Activated CD4-positive, alpha-beta T cell treated with anti-CD3 and anti-CD28 coated beads for 36 hours (primary cell): ENCODE measurements at regions of chr14 and their contacts with region 1.

Region 1: DNA sequence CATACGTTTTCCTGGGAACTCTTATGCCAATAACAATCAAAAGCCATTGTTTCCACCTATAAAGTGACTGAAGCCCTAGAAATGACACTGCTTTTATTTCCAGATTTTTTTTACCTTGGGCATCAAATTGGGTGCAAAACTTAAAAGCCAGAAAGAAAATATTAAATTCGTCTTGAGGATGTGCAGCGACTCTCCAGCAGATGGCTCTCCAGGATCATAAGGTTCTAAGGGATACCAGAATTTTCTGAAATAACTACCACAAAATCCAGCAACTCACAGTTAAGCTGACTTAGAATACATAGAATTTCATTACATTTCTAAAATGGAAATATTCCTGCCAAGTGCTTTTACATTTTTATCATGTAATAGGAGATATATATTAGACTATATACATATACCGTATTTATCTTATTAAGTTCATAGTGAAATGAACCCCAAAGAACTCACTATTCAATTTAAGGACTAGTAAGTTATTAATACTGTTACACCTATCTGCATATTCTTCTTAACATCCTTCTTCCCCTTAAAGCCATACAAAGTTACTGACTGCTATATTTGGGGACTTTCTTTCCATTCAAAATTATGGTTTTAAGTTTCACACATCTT is 44.0 kb downstream of the ARMH4 start:
- DNase-seq: peak; percentile 59
- ATAC-seq: no peak
- H3K4me3 Mint-ChIP-seq: no peak overlapping the region
- H3K27ac Mint-ChIP-seq: no peak overlapping the region
- H3K4me1 Mint-ChIP-seq: peaks cover 6% of the 10 kb centered on the region
- H3K27me3 Mint-ChIP-seq: peaks cover 14% of the 10 kb centered on the region

Region 2: DNA sequence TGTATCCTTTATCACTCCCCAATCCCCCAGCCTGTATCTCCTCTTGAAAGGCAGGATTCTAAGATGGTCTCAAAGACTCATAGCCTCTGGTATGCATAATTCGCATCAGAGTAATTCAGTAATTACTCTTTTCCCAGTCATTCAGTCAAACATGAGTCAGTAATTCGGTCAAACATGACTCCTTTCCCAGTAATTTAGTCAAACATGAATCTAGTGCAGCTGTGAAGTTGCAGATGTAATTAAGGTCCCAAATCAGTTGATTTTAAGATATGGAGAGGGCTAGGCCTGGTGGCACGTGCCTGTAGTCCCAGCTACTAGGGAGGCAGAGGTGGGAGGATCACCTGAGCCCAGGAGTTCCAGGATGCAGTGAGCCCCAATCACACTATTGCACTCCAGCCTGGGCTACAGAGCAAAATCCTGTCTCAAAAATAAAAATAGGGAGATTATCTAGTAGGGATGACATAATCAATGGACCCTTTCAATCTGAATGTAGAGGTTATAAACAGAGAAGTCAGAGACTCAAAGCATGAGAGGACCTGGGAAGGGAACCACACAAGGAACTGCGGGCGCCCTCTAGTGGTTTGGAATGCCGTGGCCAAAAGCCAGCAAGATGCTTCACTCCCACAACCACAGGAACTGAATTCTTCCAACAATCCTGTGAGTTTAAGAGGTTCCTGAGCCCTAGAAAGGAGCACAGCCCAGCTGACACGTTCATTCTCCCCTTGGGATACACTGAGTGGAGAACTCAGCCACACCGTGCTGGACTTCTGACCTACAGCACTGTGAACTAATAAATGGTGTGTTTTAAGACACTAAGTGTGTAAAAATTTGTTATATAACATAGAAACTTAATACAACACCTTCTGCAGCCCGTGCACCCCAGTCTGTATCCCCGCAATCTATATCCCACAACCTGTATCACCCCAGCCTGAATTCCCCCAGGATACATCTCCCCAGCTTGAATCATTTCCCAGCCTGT is 58.2 kb after region 1 on chr14:
- CTCF ChIA-PET with region 1: interaction called, 6 read pairs
- POLR2A ChIA-PET with region 1: no interaction called
- intact Hi-C with region 1: loop called (anchors 1 kb)
- DNase-seq: peak; percentile 89
- ATAC-seq: peak; percentile 73
- H3K4me3 Mint-ChIP-seq: no peak overlapping the region
- H3K27ac Mint-ChIP-seq: no peak overlapping the region
- H3K4me1 Mint-ChIP-seq: peaks cover 9% of the 10 kb centered on the region
- H3K27me3 Mint-ChIP-seq: peaks cover 5% of the 10 kb centered on the region

Region 3: DNA sequence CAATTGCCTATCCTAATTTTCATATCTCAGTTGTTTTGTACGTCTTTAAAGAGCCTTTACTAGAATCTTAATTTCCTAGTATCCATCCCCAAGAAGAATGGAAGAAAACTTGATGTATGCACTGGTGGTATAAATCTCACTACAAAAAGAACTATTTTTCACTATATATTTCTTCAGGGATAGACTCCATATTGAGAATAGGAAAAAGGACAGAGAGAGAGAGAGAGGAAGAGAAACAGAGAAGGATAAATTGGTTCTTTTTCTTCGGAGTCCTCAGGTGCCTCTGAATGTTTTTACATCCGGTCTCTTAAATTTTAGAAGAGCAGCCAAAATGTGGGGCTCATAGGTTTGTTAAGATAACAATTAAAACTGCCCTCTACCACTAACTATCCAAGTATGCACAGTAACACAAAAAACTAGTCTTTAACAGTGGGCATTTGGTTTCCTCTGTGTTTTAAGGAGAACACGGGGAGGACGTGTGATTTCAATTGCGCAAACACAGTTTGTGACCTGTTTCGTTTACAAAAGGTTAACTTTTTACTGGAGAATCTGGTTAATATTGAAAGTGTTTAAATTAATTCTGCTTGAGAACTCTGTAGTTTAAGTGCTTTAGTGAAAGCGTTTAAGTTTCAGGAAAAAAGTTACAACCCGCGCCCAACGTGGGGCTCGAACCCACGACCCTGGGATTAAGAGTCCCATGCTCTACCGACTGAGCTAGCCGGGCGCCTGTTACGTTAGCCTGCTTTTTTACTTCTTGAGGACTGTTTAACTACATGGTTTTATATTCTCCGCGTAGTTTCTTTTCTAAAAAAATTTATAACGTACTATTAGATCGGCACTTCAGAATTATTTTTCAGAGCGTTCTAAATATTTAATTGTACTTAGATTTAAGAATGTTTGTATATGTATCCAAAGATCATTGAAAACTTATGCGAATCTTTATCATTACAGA is 131.5 kb after region 1 on chr14:
- CTCF ChIA-PET with region 1: no interaction called
- POLR2A ChIA-PET with region 1: no interaction called
- intact Hi-C with region 1: loop called in 1 of 2 experiments (anchors 5 kb)
- DNase-seq: peak; percentile 87
- ATAC-seq: peak; percentile 6
- H3K4me3 Mint-ChIP-seq: no peak overlapping the region
- H3K27ac Mint-ChIP-seq: no peak overlapping the region
- H3K4me1 Mint-ChIP-seq: peaks cover 21% of the 10 kb centered on the region
- H3K27me3 Mint-ChIP-seq: no peaks in the 10 kb centered on the region

Region 4: DNA sequence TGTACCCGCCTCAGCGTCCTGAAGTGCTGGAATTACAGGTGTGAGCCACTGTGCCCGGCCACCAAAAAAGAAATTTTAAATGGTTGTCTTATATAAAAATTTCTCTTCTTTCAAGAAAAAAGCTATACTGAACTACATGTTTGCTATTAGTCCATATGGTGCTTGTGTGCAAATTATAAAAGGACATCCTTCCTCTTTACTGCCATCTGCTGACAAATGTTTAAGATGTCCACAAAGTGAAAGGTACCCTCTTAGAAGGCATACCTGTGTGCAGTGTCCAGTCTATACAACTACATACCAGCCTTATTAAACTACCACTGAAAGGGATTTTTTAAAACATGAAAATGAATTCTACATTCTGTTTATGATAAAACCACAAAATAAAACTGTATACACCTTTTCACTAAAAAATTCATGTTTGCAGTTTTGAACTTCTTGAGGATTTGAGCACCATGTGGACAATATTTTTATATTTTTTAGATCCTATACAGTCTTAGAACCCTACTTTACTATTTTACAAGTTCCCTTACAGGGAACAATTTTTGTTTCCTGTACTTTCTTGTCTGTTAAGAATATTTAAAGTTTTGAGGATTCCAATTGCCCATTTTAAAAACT is 254.9 kb after region 1 on chr14:
- CTCF ChIA-PET with region 1: interaction called, 3 read pairs
- POLR2A ChIA-PET with region 1: no interaction called
- intact Hi-C with region 1: loop called (anchors 1 to 2 kb)
- DNase-seq: no peak
- ATAC-seq: peak; percentile 63
- H3K4me3 Mint-ChIP-seq: no peak overlapping the region
- H3K27ac Mint-ChIP-seq: no peak overlapping the region
- H3K4me1 Mint-ChIP-seq: peaks cover 8% of the 10 kb centered on the region
- H3K27me3 Mint-ChIP-seq: no peaks in the 10 kb centered on the region

Region 5: DNA sequence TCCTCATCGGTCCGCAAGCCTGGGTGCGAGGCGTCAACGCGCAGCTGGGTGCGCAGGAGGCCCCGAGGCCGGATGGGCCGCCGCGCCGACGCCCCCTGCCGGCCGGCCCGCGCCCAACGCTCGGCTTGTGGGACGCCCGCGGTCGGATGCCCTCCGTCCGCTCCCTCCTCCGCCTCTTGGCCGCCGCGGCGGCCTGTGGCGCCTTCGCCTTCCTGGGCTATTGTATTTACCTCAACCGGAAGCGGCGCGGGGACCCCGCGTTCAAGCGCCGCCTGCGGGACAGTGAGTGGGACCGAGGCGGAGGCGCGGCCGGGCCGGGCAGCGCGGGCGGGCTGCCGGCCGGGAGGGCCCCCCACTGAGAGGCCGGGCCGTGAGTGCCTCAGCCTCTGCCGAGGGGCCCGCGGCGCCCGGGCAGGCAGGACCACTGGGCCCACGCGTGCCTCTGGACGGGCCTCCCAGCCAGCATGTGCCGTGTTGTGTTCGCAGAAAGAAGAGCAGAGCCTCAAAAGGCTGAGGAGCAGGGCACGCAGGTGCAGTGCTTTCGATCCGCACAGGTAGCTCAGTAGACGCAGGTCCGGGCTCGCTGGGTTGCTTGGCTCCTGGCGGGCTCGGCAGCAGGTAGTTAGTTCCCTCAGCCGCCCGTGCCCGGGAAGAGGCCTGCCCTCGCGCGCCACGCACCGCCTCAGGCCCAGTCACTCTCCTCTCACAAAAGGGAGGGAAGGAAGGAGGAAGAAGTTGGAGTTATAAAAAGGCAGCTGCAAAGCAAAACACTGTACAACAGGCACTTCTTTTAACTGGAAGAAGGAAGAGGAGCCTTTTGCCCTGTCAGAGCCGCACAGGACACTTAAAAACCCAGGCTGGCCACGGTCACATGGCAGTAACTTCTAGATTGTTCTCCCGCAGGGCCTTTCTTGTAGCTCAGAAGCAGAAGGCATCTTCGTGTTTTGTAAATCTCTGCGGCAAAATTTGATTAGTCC is 288.1 kb after region 1 on chr14 and contains the start of gene TOMM20L:
- CTCF ChIA-PET with region 1: interaction called, 6 read pairs
- POLR2A ChIA-PET with region 1: no interaction called
- intact Hi-C with region 1: loop called (anchors 1 kb)
- DNase-seq: peak; percentile 82
- ATAC-seq: peak; percentile 92
- H3K4me3 Mint-ChIP-seq: peak within 1 kb of the TSS; percentile 60
- H3K27ac Mint-ChIP-seq: peak within 1 kb of the TSS; percentile 70
- H3K4me1 Mint-ChIP-seq: peaks cover 12% of the 10 kb centered on the region
- H3K27me3 Mint-ChIP-seq: no peaks in the 10 kb centered on the region
- total RNA-seq, gene TOMM20L: not detected

Region 6: DNA sequence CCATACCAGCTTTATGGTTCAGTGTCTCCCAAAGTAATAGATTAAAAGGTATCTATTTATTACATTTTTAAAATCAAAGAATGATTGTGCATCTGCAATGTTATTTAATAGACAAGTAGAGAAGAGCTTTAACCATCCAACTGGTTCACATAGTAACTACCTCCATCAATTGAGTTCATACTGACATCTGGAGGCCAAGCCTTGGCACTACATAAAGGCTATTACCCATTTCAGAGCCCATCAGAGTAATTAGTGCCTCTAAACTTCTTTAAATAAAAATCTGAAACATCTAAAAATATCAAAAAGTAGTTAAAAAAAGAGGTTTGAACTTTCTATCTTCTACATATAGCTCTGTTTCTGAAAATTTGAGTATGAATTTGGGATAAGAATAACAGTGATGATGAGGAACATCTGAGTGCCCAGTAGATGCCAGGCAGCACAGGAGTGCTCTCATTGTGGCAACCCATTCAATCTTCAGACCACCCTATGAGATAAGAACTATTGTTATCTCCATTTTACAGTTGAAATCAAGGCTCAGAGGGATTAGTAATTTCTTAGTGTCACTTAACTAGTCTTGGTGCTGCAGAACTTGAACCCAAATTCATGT is 947.5 kb after region 1 on chr14:
- CTCF ChIA-PET with region 1: interaction called, 3 read pairs
- POLR2A ChIA-PET with region 1: no interaction called
- intact Hi-C with region 1: loop called in 1 of 2 experiments (anchors 10 kb)
- DNase-seq: peak; percentile 38
- ATAC-seq: peak; percentile 61
- H3K4me3 Mint-ChIP-seq: no peak overlapping the region
- H3K27ac Mint-ChIP-seq: no peak overlapping the region
- H3K4me1 Mint-ChIP-seq: no peaks in the 10 kb centered on the region
- H3K27me3 Mint-ChIP-seq: peaks cover 2% of the 10 kb centered on the region